ENCODE measurements at regions of chr6 and their contacts with region 1.

Region 1: GRCh38 chr6:83514866-83515466 is 2.6 kb downstream of the PRSS35 start:
- DNase-seq: peak; percentile 71
- H3K4me3 Mint-ChIP-seq: no peak overlapping the region
- H3K27ac Mint-ChIP-seq: no peak overlapping the region
- H3K4me1 Mint-ChIP-seq: peaks cover 6% of the 10 kb centered on the region
- H3K27me3 Mint-ChIP-seq: no peaks in the 10 kb centered on the region
- CTCF ChIP-seq: peak; percentile 81

Region 2: DNA sequence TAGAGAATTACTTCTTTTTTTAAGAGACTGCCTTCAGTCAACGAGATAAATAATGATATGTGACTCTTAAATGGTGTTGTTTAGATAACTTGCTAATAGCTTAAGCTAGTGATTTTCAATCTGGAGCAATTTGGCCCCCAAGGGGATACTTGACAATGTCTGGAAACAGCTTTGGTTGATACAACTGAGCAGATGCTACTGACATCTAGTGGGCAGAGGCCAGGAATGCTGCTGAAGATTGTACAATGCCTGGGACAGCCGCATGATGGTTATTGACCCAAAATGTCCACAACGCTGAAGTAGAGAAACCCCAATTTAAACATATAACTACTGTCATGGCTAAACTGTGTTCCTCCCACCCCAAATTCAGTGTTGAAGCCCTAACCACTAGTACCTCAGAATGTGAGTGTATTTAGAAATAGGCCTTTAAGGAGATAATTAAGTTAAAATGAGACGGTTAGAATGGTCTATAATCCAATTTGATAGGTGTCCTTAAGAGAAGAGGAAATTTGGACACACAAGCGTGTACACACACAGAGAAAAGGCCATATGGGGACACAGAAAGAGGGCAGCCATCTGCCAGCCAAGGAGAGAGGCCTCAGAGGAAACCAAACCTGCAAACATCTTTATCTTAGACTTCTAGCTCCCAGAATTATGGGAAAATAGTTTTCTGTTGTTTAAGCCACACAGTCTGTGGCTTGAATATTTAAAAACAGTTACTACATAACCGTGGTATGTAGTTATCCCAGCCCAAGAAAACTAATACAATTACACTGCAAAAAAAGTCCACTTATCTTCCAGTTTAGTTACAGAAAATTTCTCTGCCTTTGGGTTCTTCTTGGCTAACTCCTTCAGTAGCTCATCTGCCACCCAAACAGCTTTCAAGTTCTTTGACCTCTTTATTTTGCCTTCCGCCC is 299.6 kb before region 1 on chr6:
- CTCF ChIA-PET with region 1: interaction called, 397 read pairs
- POLR2A ChIA-PET with region 1: interaction called, 3 read pairs
- intact Hi-C with region 1: no loop called
- DNase-seq: peak; percentile 77
- H3K4me3 Mint-ChIP-seq: no peak overlapping the region
- H3K27ac Mint-ChIP-seq: no peak overlapping the region
- H3K4me1 Mint-ChIP-seq: no peaks in the 10 kb centered on the region
- H3K27me3 Mint-ChIP-seq: no peaks in the 10 kb centered on the region
- CTCF ChIP-seq: peak; percentile 71

Region 3: DNA sequence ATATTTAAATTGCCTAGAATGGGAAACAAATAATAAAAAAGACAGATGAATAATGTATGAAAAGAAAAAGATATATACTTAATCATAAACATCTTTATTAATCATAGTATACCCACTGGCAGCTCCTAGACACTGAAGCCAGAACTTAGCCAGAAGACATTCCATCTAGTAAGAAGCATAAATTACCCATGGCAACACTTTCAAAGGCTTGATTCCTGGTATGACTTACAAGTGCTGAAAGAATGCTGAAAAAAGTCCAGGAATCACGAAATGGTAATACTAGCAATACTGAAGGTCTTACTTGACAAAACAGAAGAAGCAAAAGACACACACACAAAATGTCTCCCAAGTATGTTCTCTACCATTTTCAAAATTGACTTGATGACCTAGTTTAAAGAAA is 283.8 kb before region 1 on chr6:
- CTCF ChIA-PET with region 1: interaction called, 397 read pairs
- POLR2A ChIA-PET with region 1: no interaction called
- intact Hi-C with region 1: no loop called
- DNase-seq: no peak
- H3K4me3 Mint-ChIP-seq: no peak overlapping the region
- H3K27ac Mint-ChIP-seq: no peak overlapping the region
- H3K4me1 Mint-ChIP-seq: no peaks in the 10 kb centered on the region
- H3K27me3 Mint-ChIP-seq: no peaks in the 10 kb centered on the region
- CTCF ChIP-seq: no peak

Region 4: DNA sequence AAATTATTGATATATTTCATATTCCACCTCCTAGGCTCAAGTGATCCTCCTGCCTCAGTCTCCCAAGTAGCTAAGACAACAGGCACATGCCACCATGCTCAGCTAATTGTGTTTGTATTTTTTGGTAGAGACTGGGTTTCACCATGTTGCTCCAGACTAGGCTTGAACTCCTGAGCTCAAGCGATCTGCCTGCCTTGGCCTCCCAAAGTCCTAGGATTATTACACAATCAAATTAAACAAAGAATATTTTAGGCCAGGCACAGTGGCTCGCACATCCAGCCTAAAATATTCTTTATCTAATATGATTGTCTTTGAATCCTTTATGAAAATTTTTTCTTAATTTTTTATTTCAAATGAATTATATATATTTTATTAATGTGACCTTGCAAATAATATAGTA is 101.9 kb before region 1 on chr6:
- CTCF ChIA-PET with region 1: interaction called, 380 read pairs
- POLR2A ChIA-PET with region 1: interaction called, 12 read pairs
- intact Hi-C with region 1: loop called (anchors 1 kb)
- DNase-seq: no peak
- H3K4me3 Mint-ChIP-seq: no peak overlapping the region
- H3K27ac Mint-ChIP-seq: no peak overlapping the region
- H3K4me1 Mint-ChIP-seq: no peaks in the 10 kb centered on the region
- H3K27me3 Mint-ChIP-seq: no peaks in the 10 kb centered on the region
- CTCF ChIP-seq: no peak

Region 5: DNA sequence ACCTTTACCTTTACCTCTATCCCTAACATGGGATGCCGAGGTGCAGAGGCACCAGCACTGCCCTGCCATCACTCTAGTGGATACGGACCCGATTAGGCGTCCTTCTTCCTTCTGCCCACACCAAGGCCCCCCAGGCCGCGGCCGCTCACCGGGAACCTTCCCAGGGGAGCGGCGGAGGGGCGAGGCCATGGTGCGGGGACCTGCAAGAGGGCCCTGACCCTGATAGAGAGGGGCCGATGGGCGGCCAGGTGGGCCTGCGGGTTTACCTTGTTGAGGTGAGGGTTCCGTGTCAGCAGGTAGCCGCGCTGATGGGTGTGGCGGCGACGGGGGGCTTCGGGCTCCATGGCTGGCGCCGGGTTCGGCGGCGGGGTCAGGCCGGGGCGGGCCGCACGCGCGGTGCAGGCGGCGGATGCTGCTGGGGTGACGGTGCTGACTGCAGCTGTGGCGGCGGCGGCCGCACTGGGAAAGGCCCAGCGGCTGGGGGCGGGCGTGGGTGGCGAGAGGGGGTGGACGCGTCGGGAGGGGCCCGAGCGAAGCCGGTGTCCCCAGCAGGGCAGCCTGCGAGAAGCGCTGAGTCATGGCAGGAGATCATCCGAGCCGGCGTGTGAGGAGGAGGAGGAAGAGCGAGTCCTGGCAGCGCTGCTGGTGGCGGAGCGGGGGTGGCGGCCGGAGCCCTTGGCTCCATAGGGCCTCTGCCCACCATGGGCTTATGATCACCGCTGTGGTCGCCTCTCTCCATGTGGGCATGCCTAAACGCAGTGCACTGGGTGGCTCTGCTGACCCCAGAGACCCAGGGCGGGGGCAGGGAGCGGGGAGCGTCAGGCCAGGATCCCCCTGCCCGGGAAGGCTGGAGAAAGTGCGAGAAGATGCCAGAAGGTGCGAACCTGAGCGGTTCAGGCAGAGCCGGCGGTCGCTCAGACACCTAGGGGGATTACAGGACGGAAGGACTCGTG is 84.1 kb before region 1 on chr6 and contains the start of gene ME1:
- CTCF ChIA-PET with region 1: interaction called, 380 read pairs
- POLR2A ChIA-PET with region 1: interaction called, 5 read pairs
- intact Hi-C with region 1: loop called (anchors 5 kb)
- DNase-seq: peak; percentile 86
- H3K4me3 Mint-ChIP-seq: peak within 1 kb of the TSS; percentile 74
- H3K27ac Mint-ChIP-seq: peak within 1 kb of the TSS; percentile 73
- H3K4me1 Mint-ChIP-seq: peaks cover 16% of the 10 kb centered on the region
- H3K27me3 Mint-ChIP-seq: no peaks in the 10 kb centered on the region
- CTCF ChIP-seq: no peak
- total RNA-seq, gene ME1: 16.7 and 17.8 TPM in 2 replicates

Region 6: GRCh38 chr6:83467620-83468036 is 47.3 kb before region 1 on chr6:
- CTCF ChIA-PET with region 1: interaction called, 19 read pairs
- POLR2A ChIA-PET with region 1: no interaction called
- intact Hi-C with region 1: no loop called
- DNase-seq: no peak
- H3K4me3 Mint-ChIP-seq: no peak overlapping the region
- H3K27ac Mint-ChIP-seq: no peak overlapping the region
- H3K4me1 Mint-ChIP-seq: peaks cover 17% of the 10 kb centered on the region
- H3K27me3 Mint-ChIP-seq: no peaks in the 10 kb centered on the region
- CTCF ChIP-seq: no peak

Region 7: GRCh38 chr6:83592770-83593394 is 77.9 kb after region 1 on chr6:
- CTCF ChIA-PET with region 1: interaction called, 4 read pairs
- POLR2A ChIA-PET with region 1: no interaction called
- intact Hi-C with region 1: loop called (anchors 2 kb)
- DNase-seq: peak; percentile 52
- H3K4me3 Mint-ChIP-seq: no peak overlapping the region
- H3K27ac Mint-ChIP-seq: no peak overlapping the region
- H3K4me1 Mint-ChIP-seq: peaks cover 6% of the 10 kb centered on the region
- H3K27me3 Mint-ChIP-seq: peaks cover 8% of the 10 kb centered on the region
- CTCF ChIP-seq: peak; percentile 48

Region 8: GRCh38 chr6:83853178-83854000 is 338.4 kb after region 1 on chr6 and contains the start of gene RIPPLY2:
- CTCF ChIA-PET with region 1: no interaction called
- POLR2A ChIA-PET with region 1: no interaction called
- intact Hi-C with region 1: no loop called
- DNase-seq: no peak
- H3K4me3 Mint-ChIP-seq: peak within 1 kb of the TSS; percentile 19
- H3K27ac Mint-ChIP-seq: no peak within 1 kb of the TSS
- H3K4me1 Mint-ChIP-seq: no peaks in the 10 kb centered on the region
- H3K27me3 Mint-ChIP-seq: peaks cover 62% of the 10 kb centered on the region
- CTCF ChIP-seq: no peak
- total RNA-seq, gene RIPPLY2: not detected in 2 replicates

Region 9: DNA sequence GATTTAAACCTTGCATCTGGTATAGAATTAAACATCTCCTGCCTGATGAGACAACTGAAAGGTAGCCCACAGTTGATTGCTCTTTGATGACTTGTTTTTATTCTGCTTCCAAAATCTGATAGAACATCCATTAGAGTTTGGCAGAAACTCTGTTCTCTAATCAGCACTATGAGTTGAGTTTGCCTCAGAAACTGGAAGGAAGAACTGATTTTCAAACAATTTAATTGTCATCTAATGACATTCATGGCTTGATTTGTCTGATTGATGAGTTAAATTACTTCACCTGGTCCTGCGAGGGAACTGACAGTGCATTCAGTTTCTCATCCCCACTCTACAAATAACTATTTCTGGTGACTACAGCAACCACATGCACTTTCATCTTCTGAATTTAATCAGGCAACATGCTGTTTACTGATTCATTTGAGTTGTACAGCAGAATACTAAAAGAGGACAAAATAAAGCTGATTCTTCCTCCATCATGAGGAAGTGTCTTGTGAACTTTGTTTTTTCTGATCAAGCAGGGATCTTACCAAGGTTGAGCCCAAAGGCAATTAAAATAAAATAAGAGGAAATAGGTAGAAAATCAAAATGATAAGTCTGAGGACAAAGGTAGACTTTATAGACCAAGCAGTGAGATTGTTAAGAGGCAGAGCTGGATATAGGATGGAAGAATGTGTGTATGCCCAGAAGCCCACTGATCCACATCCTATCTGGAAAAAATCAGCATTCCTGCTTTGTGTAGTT is 502.9 kb after region 1 on chr6:
- CTCF ChIA-PET with region 1: no interaction called
- POLR2A ChIA-PET with region 1: no interaction called
- intact Hi-C with region 1: no loop called
- DNase-seq: no peak
- H3K4me3 Mint-ChIP-seq: no peak overlapping the region
- H3K27ac Mint-ChIP-seq: no peak overlapping the region
- H3K4me1 Mint-ChIP-seq: no peaks in the 10 kb centered on the region
- H3K27me3 Mint-ChIP-seq: no peaks in the 10 kb centered on the region
- CTCF ChIP-seq: no peak